ENCODE measurements at regions of chr13 and their contacts with region 1.

Region 1: GRCh38 chr13:99027260-99027659 is 49.4 kb upstream of the DOCK9 start:
- DNase-seq: peak; percentile 73
- H3K4me3 Mint-ChIP-seq: peak overlapping the region; percentile 44
- H3K27ac Mint-ChIP-seq: peak overlapping the region; percentile 90
- H3K4me1 Mint-ChIP-seq: peaks cover 93% of the 10 kb centered on the region
- H3K27me3 Mint-ChIP-seq: no peaks in the 10 kb centered on the region

Region 2: GRCh38 chr13:98910501-98910951 is 116.7 kb before region 1 on chr13:
- CTCF ChIA-PET with region 1: interaction called, 5 read pairs
- POLR2A ChIA-PET with region 1: no interaction called
- intact Hi-C with region 1: loop called (anchors 1 kb)
- DNase-seq: peak; percentile 64
- H3K4me3 Mint-ChIP-seq: no peak overlapping the region
- H3K27ac Mint-ChIP-seq: peak overlapping the region; percentile 94
- H3K4me1 Mint-ChIP-seq: peaks cover 60% of the 10 kb centered on the region
- H3K27me3 Mint-ChIP-seq: no peaks in the 10 kb centered on the region

Region 3: DNA sequence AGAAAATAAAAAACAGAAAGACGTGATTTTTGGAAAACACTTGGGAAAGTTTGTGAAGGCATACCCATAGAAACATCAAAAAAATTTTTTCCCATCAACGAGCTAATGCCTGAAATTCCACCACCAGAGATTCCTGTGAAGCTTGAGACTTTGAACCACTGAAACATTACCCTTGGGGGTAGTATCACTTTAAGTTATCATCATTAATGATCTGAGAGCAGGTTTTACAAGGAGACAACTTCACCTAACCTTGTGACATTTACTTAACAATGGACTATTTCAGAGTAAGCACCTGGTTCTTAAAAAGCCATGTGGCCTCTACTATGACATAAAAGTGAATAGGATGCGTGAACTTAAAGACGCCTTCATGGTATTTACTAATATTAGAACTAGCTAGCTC is 101.3 kb before region 1 on chr13:
- CTCF ChIA-PET with region 1: no interaction called
- POLR2A ChIA-PET with region 1: no interaction called
- intact Hi-C with region 1: no loop called
- DNase-seq: no peak
- H3K4me3 Mint-ChIP-seq: no peak overlapping the region
- H3K27ac Mint-ChIP-seq: no peak overlapping the region
- H3K4me1 Mint-ChIP-seq: peaks cover 8% of the 10 kb centered on the region
- H3K27me3 Mint-ChIP-seq: no peaks in the 10 kb centered on the region

Region 4: DNA sequence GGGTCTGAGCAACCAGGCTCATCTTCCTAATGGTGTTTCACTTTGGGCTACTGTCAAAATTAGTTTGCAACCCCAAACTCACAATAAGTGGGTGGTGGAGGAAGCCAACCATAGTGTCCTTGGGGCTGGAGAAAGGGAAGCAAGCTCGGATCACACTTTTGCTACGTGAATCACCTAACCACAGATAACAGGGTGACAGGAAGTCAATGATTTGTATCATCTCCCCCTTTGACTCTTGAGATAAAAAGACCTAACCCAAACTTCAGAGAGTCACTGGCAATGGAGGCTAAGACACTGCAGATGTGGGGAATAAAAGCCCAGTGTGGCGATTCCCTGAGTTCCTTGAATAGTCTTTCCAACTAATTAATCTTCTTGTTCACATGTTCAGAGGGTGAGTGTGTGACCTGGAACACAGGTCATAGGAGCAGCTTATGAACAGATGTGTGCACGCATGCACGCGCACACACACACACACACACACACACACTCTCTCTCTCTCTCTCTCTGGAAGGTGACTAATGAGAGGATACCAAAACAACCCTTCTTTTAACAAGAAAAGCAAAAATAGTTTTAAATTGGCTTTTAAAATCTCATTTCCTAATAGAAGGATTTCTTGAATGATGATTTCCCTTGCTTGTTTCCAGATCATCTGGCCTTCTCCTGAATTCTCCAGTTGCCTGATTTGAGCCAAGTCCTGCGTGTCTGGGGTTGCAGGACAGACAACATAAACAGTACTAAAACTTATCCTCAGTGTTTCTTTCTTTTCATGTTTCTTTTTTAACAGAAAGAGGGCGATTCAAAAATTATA is 28.2 kb before region 1 on chr13:
- CTCF ChIA-PET with region 1: interaction called, 3 read pairs
- POLR2A ChIA-PET with region 1: no interaction called
- intact Hi-C with region 1: loop called (anchors 1 kb)
- DNase-seq: peak; percentile 56
- H3K4me3 Mint-ChIP-seq: peak overlapping the region; percentile 31
- H3K27ac Mint-ChIP-seq: peak overlapping the region; percentile 76
- H3K4me1 Mint-ChIP-seq: peaks cover 90% of the 10 kb centered on the region
- H3K27me3 Mint-ChIP-seq: no peaks in the 10 kb centered on the region

Region 5: DNA sequence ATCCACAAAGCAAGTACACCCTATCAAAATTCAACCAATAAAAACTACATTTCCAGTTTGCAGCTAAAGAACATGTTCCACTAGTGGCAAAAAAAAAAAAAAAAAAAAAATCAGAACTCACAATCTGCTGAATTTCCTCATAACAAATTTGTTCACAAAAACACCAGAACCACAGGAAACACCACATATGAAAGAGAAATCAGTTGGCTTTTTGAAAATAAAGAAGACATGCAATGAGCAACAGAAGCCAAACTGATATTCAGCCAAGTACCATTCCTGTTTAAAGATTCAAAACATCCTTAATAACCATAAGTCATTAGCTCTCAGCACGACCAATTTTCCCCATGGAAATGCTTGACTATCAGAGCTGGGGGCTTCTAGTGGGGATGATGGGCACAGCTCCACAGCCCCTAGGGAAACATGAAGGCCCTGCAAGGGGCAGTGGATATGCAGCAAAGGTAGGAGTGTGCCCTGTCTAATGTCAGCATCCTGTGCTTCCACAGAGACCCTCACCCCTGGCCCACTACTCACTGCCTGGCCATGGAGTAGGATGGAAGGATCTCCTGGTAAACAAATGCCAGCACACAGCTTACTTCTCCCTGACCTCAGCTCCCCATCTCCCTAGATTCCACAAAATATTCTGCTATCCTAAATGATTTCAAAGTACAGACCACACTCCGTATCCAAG is 24.7 kb after region 1 on chr13:
- CTCF ChIA-PET with region 1: interaction called, 27 read pairs
- POLR2A ChIA-PET with region 1: interaction called, 5 read pairs
- intact Hi-C with region 1: loop called (anchors 1 kb)
- DNase-seq: no peak
- H3K4me3 Mint-ChIP-seq: peak overlapping the region; percentile 31
- H3K27ac Mint-ChIP-seq: peak overlapping the region; percentile 76
- H3K4me1 Mint-ChIP-seq: peaks cover 83% of the 10 kb centered on the region
- H3K27me3 Mint-ChIP-seq: no peaks in the 10 kb centered on the region